ENCODE measurements at regions of chr10 and their contacts with region 1.

Region 1: GRCh38 chr10:114470956-114471905 is 66.9 kb upstream of the AFAP1L2 start:
- DNase-seq: peak; percentile 24
- ATAC-seq: peak; percentile 99
- H3K4me3 ChIP-seq: no peak overlapping the region
- H3K27ac ChIP-seq: no peak overlapping the region
- H3K4me1 ChIP-seq: 0 out of 2 replicates have a peak, but pooled peaks cover 3% of the 10 kb centered on the region
- H3K27me3 ChIP-seq: no peaks in the 10 kb centered on the region
- CTCF ChIP-seq: peak; percentile 83 to 86 (median 85)
- EP300 ChIP-seq: no peak
- POLR2A ChIP-seq: no peak
- RAD21 ChIP-seq: peak; percentile 89

Region 2: DNA sequence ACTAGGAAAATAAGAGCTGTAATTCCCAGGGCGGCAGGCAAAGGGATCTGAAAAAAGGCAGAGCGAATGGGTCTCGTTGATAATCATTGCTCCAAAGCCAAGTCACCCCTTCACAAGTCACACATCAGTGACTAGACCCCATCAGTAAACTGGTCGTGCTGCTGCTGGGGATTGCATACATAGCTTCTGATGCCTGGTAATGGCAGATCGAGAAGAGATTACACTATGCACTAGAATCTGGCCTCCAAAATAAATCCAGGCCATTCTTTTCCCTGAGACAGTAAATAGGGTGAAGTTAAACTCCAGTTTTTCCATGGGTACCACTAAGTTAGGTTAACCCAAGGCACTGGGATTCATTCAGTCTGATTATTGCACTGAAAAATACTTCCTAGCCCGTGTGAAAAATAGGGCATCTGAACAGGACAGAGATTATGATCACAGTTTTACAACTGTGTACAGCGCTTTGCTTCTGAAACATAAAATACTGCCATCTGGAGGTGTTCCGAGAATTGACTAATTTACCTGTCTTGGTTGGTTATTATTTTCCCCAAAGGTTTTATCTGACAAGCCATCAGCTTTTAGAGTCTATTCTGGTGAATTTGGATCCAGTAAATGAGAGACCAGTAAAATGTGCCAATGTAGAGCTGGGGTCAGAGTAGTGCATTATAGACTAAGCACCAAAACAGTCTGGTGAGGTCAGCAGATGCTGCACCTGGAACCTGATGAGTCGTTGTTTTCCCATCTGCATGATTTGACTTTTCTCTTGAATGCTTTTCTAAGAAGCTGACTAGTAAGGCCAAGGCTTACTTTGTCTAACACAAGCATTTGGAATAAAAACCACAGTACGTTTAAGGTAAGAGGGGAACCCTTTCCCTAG is 15.9 kb after region 1 on chr10:
- CTCF ChIA-PET with region 1: interaction called, 17 read pairs
- POLR2A ChIA-PET with region 1: no interaction called
- RAD21 ChIA-PET with region 1: interaction called, 4 read pairs
- SMC1A ChIA-PET with region 1: interaction called, 9 read pairs
- in situ Hi-C with region 1: no loop called
- intact Hi-C with region 1: no loop called
- DNase-seq: no peak
- ATAC-seq: no peak
- H3K4me3 ChIP-seq: no peak overlapping the region
- H3K27ac ChIP-seq: no peak overlapping the region
- H3K4me1 ChIP-seq: no peaks in the 10 kb centered on the region; the same call in 1 of the 2 replicates
- H3K27me3 ChIP-seq: no peaks in the 10 kb centered on the region
- CTCF ChIP-seq: no peak
- EP300 ChIP-seq: no peak
- POLR2A ChIP-seq: no peak
- RAD21 ChIP-seq: no peak

Region 3: DNA sequence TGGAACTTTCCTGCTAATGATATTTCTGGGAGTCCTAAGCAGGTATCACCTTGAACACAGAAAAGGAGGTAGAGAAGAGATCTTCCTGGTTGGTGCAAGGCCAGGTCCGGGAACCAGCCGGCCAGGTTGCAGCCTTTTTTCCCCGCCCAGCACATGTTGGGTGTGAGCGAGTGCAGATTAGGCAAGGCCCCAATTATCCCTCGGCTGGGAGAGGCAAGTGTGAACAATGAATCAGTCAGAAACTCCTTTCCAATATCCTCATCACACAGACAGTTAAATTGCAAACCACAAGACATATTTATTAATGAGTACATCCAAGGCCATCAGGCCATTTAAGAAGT is 48.0 kb after region 1 on chr10:
- CTCF ChIA-PET with region 1: interaction called, 10 read pairs
- POLR2A ChIA-PET with region 1: no interaction called
- RAD21 ChIA-PET with region 1: interaction called, 6 read pairs
- SMC1A ChIA-PET with region 1: interaction called, 21 read pairs
- in situ Hi-C with region 1: no loop called
- intact Hi-C with region 1: no loop called
- DNase-seq: no peak
- ATAC-seq: no peak
- H3K4me3 ChIP-seq: no peak overlapping the region
- H3K27ac ChIP-seq: no peak overlapping the region
- H3K4me1 ChIP-seq: no peaks in the 10 kb centered on the region
- H3K27me3 ChIP-seq: no peaks in the 10 kb centered on the region; a peak in 1 of 4 replicates
- CTCF ChIP-seq: no peak
- EP300 ChIP-seq: no peak
- POLR2A ChIP-seq: no peak
- RAD21 ChIP-seq: no peak

Region 4: GRCh38 chr10:114541081-114541796 is 70.0 kb after region 1 on chr10:
- CTCF ChIA-PET with region 1: interaction called, 98 read pairs
- POLR2A ChIA-PET with region 1: no interaction called
- RAD21 ChIA-PET with region 1: interaction called, 56 read pairs
- SMC1A ChIA-PET with region 1: interaction called, 15 read pairs
- in situ Hi-C with region 1: no loop called
- intact Hi-C with region 1: no loop called
- DNase-seq: no peak
- ATAC-seq: peak; percentile 35
- H3K4me3 ChIP-seq: no peak overlapping the region
- H3K27ac ChIP-seq: no peak overlapping the region
- H3K4me1 ChIP-seq: peaks cover 51% of the 10 kb centered on the region
- H3K27me3 ChIP-seq: no peaks in the 10 kb centered on the region
- CTCF ChIP-seq: no peak
- EP300 ChIP-seq: no peak
- POLR2A ChIP-seq: no peak
- RAD21 ChIP-seq: no peak

Region 5: GRCh38 chr10:114694752-114695151 is 223.5 kb after region 1 on chr10:
- CTCF ChIA-PET with region 1: interaction called, 35 read pairs
- POLR2A ChIA-PET with region 1: no interaction called
- RAD21 ChIA-PET with region 1: interaction called, 6 read pairs
- SMC1A ChIA-PET with region 1: interaction called, 7 read pairs
- in situ Hi-C with region 1: loop called (anchors 5 kb)
- intact Hi-C with region 1: loop called (anchors 2 kb)
- DNase-seq: no peak
- ATAC-seq: peak; percentile 59; the same call in 2 of the 3 replicates
- H3K4me3 ChIP-seq: no peak overlapping the region
- H3K27ac ChIP-seq: no peak overlapping the region
- H3K4me1 ChIP-seq: no peaks in the 10 kb centered on the region
- H3K27me3 ChIP-seq: no peaks in the 10 kb centered on the region; a peak in 2 of 4 replicates
- CTCF ChIP-seq: peak; percentile 40 to 54 (median 44); a peak in 5 of 6 replicates
- EP300 ChIP-seq: no peak
- POLR2A ChIP-seq: no peak
- RAD21 ChIP-seq: peak; percentile 61

Region 6: DNA sequence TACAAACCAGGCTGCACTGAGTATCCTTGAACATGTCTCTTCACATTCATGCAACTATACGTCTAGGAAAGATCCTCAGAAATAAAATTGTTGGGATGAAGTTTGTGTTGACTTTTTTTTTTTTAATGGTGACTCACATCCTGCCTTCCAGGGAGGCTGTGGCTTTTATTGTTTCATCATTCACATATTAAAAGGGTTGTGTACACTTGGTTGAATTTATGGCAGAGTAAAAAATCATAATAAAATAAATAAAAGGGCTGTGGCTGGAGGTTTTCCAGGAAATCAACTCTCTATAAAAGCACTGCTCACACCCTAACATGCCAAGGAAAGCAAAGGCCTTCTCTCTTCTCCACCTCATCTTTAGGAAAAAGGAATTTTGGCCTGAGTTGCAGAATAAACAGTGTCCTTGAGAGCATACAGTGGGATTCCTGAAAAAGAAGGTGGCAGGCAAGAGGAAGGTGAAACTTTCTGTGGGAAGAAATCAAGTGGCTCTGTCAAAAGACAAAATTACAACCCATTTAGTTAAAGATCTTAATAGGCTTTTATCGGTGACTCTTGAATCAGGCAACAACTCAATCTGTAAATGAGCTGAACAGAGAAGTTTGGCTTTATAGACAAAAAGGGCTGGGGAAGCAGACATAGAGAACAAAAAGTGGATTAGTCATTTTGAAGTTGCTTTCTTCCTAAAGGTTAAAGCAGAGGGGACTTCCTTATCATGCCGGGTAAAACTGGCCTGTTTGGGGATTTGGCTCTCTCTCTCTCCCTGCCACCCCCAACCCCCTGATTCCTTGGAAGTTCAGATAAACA is 308.8 kb after region 1 on chr10:
- CTCF ChIA-PET with region 1: interaction called, 35 read pairs
- POLR2A ChIA-PET with region 1: no interaction called
- RAD21 ChIA-PET with region 1: no interaction called
- SMC1A ChIA-PET with region 1: interaction called, 3 read pairs
- in situ Hi-C with region 1: loop called (anchors 10 kb)
- intact Hi-C with region 1: no loop called
- DNase-seq: no peak
- ATAC-seq: peak; percentile 53
- H3K4me3 ChIP-seq: no peak overlapping the region
- H3K27ac ChIP-seq: no peak overlapping the region
- H3K4me1 ChIP-seq: no peaks in the 10 kb centered on the region
- H3K27me3 ChIP-seq: peaks cover 0 to 2% of the 10 kb centered on the region in 2 experiments; a peak in 1 of 4 replicates
- CTCF ChIP-seq: no peak
- EP300 ChIP-seq: no peak
- POLR2A ChIP-seq: no peak
- RAD21 ChIP-seq: no peak

Region 7: GRCh38 chr10:114876602-114877300 is 405.5 kb after region 1 on chr10:
- CTCF ChIA-PET with region 1: interaction called, 18 read pairs
- POLR2A ChIA-PET with region 1: no interaction called
- RAD21 ChIA-PET with region 1: interaction called, 4 read pairs
- SMC1A ChIA-PET with region 1: interaction called, 7 read pairs
- in situ Hi-C with region 1: no loop called
- intact Hi-C with region 1: no loop called
- DNase-seq: peak; percentile 8
- ATAC-seq: peak; percentile 93
- H3K4me3 ChIP-seq: no peak overlapping the region
- H3K27ac ChIP-seq: no peak overlapping the region
- H3K4me1 ChIP-seq: no peaks in the 10 kb centered on the region
- H3K27me3 ChIP-seq: no peaks in the 10 kb centered on the region; a peak in 1 of 4 replicates
- CTCF ChIP-seq: peak; percentile 84 to 89 (median 85)
- EP300 ChIP-seq: no peak
- POLR2A ChIP-seq: no peak
- RAD21 ChIP-seq: peak; percentile 94

Measured in GM12878 (cell line).